ENCODE measurements at regions of chr16 and their contacts with region 1.

Region 1: GRCh38 chr16:88619859-88620815 is 18.2 kb upstream of the IL17C start:
- DNase-seq: peak; percentile 62
- ATAC-seq: peak; percentile 82
- H3K4me3 Mint-ChIP-seq: no peak overlapping the region
- H3K27ac Mint-ChIP-seq: peak overlapping the region; percentile 67
- H3K4me1 Mint-ChIP-seq: peaks cover 20% of the 10 kb centered on the region
- H3K27me3 Mint-ChIP-seq: no peaks in the 10 kb centered on the region

Region 2: DNA sequence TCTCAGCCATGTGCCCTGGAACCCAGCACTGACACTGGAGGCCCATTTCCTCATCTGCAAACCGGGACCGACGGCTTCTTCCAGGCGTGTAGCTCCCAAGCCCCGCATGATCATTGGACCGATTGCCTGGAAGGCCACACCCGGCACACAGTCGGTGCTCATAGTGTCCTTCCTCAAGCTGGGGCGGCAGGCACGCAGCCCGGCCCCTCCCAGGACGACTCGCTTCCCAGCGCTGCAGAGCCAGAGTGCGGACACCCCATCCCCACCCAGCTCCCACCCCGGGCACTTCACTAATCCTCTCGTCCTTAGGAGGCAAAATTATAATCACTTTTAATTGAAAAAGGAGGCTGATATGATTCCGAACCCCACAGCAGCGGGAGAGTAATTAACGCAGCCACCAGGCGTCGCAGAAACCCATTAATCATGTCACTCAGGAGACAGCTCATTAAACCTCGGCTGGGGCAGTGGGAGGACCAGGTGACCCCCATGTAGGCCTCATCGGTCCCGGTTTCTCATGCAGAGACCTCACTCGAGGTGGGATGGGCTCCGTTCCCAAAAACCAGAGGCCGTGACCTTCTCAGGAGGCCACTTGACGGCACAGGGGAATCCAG is 204.3 kb before region 1 on chr16:
- CTCF ChIA-PET with region 1: no interaction called
- POLR2A ChIA-PET with region 1: no interaction called
- intact Hi-C with region 1: no loop called
- DNase-seq: no peak
- ATAC-seq: no peak
- H3K4me3 Mint-ChIP-seq: no peak overlapping the region
- H3K27ac Mint-ChIP-seq: no peak overlapping the region
- H3K4me1 Mint-ChIP-seq: no peaks in the 10 kb centered on the region
- H3K27me3 Mint-ChIP-seq: no peaks in the 10 kb centered on the region

Region 3: GRCh38 chr16:88578446-88579313 is 41.5 kb before region 1 on chr16:
- CTCF ChIA-PET with region 1: no interaction called
- POLR2A ChIA-PET with region 1: no interaction called
- intact Hi-C with region 1: loop called in 1 of 2 experiments (anchors 5 kb)
- DNase-seq: peak; percentile 36
- ATAC-seq: peak; percentile 50
- H3K4me3 Mint-ChIP-seq: no peak overlapping the region
- H3K27ac Mint-ChIP-seq: peak overlapping the region; percentile 72
- H3K4me1 Mint-ChIP-seq: peaks cover 46% of the 10 kb centered on the region
- H3K27me3 Mint-ChIP-seq: no peaks in the 10 kb centered on the region

Region 4: DNA sequence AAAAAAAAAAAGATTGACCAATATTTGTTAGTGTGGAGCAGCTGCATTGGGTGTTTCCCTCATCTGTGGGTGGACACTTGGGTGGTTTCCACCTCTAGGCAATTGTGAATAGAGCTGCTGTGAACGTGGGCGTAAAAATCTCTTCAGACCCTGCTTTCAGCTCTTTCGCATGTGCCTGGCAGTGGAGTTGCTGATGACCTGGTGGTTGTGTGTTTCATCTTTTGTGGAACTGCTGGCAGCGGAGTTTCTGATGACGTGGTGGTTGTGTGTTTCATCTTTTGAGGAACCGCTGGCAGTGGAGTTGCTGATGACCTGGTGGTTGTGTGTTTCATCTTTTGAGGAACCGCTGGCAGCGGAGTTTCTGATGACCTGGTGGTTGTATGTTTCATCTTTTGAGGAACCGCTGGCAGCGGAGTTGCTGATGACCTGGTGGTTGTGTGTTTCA is 28.5 kb before region 1 on chr16:
- CTCF ChIA-PET with region 1: no interaction called
- POLR2A ChIA-PET with region 1: interaction called, 5 read pairs
- intact Hi-C with region 1: loop called in 1 of 2 experiments (anchors 1 kb)
- DNase-seq: peak; percentile 61
- ATAC-seq: peak; percentile 78
- H3K4me3 Mint-ChIP-seq: no peak overlapping the region
- H3K27ac Mint-ChIP-seq: peak overlapping the region; percentile 77
- H3K4me1 Mint-ChIP-seq: peaks cover 48% of the 10 kb centered on the region
- H3K27me3 Mint-ChIP-seq: no peaks in the 10 kb centered on the region